Right ventricle myocardium superior (tissue), 1 donor: ENCODE measurements at regions of chr5 and their contacts with region 1.

Region 1: DNA sequence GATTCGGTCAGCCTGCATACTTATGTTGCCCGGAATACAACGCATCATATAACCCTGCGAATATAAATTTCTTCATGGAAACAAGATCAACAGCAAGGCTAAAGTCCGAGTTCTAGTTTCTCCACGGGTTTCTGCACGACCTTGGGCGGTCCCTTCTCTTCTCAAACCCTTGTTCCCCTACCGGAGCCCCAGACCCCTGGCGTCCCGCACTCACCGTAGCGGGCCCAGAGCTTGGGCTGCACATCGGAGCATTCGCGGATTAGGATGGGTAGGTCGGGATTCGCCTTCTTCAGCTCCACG is 438 bp downstream of the NDUFA2 start:
- DNase-seq: no peak
- ATAC-seq: no peak

Region 2: DNA sequence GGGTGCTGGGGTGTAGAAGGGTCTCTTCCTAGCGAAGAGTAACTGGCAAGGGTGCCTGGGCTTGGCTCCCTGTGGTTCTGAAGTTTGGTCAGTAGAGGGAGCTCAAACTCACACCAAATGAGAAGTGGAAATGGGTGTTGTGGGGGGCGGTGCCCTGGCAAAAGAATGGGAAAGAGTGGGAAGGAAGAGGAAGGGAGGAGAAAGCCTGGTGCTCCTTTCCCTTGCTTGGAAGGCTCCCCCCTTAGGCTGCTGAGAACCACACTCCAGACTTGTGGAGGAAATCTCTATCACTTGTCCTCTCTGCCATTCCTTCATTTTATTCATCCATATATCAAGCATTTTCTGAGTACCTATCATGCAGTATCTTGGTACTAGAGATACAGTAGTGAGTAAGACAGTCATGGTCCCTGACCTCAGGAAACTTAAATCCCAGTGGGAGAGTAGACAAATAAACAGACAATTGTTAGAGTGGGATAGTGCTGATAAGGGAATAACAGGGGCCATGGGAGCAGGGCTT is 274.0 kb before region 1 on chr5:
- intact Hi-C with region 1: loop called (anchors 10 kb)
- DNase-seq: peak; percentile 84
- ATAC-seq: peak; percentile 79

Region 3: GRCh38 chr5:140547508-140548299 is 99.3 kb before region 1 on chr5 and contains the start of gene EIF4EBP3:
- intact Hi-C with region 1: loop called (anchors 5 kb)
- DNase-seq: peak; percentile 99
- ATAC-seq: peak; percentile 97
- total RNA-seq, gene EIF4EBP3: 12.0 TPM

Region 4: GRCh38 chr5:140833997-140834723 is 187.2 kb after region 1 on chr5 and contains the start of gene PCDHA7:
- intact Hi-C with region 1: no loop called
- DNase-seq: no peak
- ATAC-seq: no peak
- total RNA-seq, gene PCDHA7: not detected